Activated naive CD4-positive, alpha-beta T cell treated with anti-CD3 and anti-CD28 coated beads for 36 hours (primary cell): ENCODE measurements at regions of chr15 and their contacts with region 1.

Region 1: GRCh38 chr15:91852741-91853510 is 582 bp upstream of the SLCO3A1 start:
- DNase-seq: peak; percentile 68
- H3K4me3 Mint-ChIP-seq: peak overlapping the region; percentile 79
- H3K27ac Mint-ChIP-seq: peak overlapping the region; percentile 61
- H3K4me1 Mint-ChIP-seq: peaks cover 59% of the 10 kb centered on the region
- H3K27me3 Mint-ChIP-seq: peaks cover 5% of the 10 kb centered on the region

Region 2: GRCh38 chr15:91302588-91303439 is 550.1 kb before region 1 on chr15:
- CTCF ChIA-PET with region 1: interaction called, 12 read pairs
- intact Hi-C with region 1: loop called (anchors 1 kb)
- DNase-seq: peak; percentile 29
- H3K4me3 Mint-ChIP-seq: no peak overlapping the region
- H3K27ac Mint-ChIP-seq: no peak overlapping the region
- H3K4me1 Mint-ChIP-seq: peaks cover 31% of the 10 kb centered on the region
- H3K27me3 Mint-ChIP-seq: no peaks in the 10 kb centered on the region

Region 3: GRCh38 chr15:91706322-91707032 is 146.4 kb before region 1 on chr15:
- CTCF ChIA-PET with region 1: interaction called, 10 read pairs
- intact Hi-C with region 1: loop called (anchors 1 kb)
- DNase-seq: peak; percentile 97
- H3K4me3 Mint-ChIP-seq: no peak overlapping the region
- H3K27ac Mint-ChIP-seq: no peak overlapping the region
- H3K4me1 Mint-ChIP-seq: peaks cover 17% of the 10 kb centered on the region
- H3K27me3 Mint-ChIP-seq: peaks cover 5% of the 10 kb centered on the region

Region 4: GRCh38 chr15:91733661-91734060 is 119.3 kb before region 1 on chr15:
- CTCF ChIA-PET with region 1: no interaction called
- intact Hi-C with region 1: no loop called
- DNase-seq: no peak
- H3K4me3 Mint-ChIP-seq: no peak overlapping the region
- H3K27ac Mint-ChIP-seq: no peak overlapping the region
- H3K4me1 Mint-ChIP-seq: no peaks in the 10 kb centered on the region
- H3K27me3 Mint-ChIP-seq: peaks cover 27% of the 10 kb centered on the region

Region 5: DNA sequence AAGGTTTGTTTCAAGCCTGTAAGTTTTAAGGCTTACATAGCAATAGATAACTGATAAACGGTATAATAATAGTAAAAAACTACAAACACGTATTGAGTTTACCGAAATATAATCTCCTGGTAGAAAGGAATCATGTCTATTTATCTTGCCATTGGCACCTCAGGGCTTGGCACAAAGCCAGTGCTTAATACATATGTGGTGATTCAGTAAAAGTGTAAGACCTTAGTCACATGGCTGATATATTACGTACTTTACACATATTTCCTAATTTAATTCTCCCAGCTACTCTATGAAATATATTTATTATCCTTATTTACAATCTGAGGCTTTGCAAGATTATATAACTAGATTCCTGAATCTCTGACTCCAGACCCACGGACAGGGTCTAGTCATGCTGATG is 31.4 kb before region 1 on chr15:
- CTCF ChIA-PET with region 1: no interaction called
- intact Hi-C with region 1: no loop called
- DNase-seq: no peak
- H3K4me3 Mint-ChIP-seq: no peak overlapping the region
- H3K27ac Mint-ChIP-seq: no peak overlapping the region
- H3K4me1 Mint-ChIP-seq: no peaks in the 10 kb centered on the region
- H3K27me3 Mint-ChIP-seq: no peaks in the 10 kb centered on the region

Region 6: DNA sequence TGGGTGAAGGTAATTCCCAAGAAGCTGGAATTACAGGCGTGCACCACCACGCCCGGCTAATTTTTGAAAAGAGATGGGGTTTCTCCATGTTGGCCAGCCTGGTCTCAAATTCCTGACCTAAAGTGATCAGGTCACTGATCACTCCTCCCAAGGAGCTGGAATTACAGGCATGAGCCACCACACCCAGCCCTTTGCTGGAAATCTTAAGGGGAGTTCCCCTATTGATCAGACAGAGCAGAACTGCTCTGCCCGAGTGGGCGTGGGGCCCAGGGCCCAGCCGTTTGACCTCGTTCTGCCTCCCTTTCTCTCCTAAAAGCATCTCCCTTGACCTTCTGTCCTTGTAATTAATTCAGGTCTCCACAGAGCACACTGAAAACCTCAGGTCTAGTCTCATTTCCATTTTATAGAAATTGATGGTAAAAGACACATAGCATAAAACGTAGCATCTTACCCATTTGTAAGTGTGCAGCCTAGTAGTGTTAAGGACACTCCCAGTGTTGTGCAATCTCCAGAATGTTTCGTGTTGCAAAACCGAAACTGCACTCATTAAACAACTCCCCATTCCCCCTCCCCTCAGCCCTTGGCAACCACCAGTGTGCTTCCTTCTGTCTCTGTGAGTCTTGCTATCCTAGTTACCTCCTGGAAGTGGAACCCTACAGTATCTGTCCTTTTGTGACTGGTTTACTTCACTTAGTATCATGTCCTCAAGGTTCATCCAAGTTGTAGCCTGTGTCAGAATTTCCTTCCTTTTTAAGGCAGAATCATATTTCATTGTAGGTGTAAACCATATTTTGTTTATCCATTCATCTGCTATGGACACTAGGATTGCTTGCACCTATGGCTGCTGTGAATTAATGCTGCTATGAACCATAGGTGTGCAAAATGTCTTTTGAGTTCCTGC is 90.0 kb after region 1 on chr15:
- CTCF ChIA-PET with region 1: interaction called, 6 read pairs
- intact Hi-C with region 1: loop called (anchors 2 kb)
- DNase-seq: peak; percentile 64
- H3K4me3 Mint-ChIP-seq: no peak overlapping the region
- H3K27ac Mint-ChIP-seq: no peak overlapping the region
- H3K4me1 Mint-ChIP-seq: peaks cover 37% of the 10 kb centered on the region
- H3K27me3 Mint-ChIP-seq: no peaks in the 10 kb centered on the region

Region 7: GRCh38 chr15:92069308-92070250 is 216.7 kb after region 1 on chr15:
- CTCF ChIA-PET with region 1: interaction called, 83 read pairs
- intact Hi-C with region 1: loop called (anchors 2 kb)
- DNase-seq: peak; percentile 78
- H3K4me3 Mint-ChIP-seq: peak overlapping the region; percentile 52
- H3K27ac Mint-ChIP-seq: peak overlapping the region; percentile 73
- H3K4me1 Mint-ChIP-seq: peaks cover 47% of the 10 kb centered on the region
- H3K27me3 Mint-ChIP-seq: no peaks in the 10 kb centered on the region

Region 8: GRCh38 chr15:92158434-92158833 is 305.5 kb after region 1 on chr15:
- CTCF ChIA-PET with region 1: no interaction called
- intact Hi-C with region 1: loop called (anchors 2 kb)
- DNase-seq: peak; percentile 83
- H3K4me3 Mint-ChIP-seq: no peak overlapping the region
- H3K27ac Mint-ChIP-seq: no peak overlapping the region
- H3K4me1 Mint-ChIP-seq: peaks cover 26% of the 10 kb centered on the region
- H3K27me3 Mint-ChIP-seq: no peaks in the 10 kb centered on the region